ACHN (cell line): ENCODE measurements at regions of chr2 and their contacts with region 1.

Region 1: DNA sequence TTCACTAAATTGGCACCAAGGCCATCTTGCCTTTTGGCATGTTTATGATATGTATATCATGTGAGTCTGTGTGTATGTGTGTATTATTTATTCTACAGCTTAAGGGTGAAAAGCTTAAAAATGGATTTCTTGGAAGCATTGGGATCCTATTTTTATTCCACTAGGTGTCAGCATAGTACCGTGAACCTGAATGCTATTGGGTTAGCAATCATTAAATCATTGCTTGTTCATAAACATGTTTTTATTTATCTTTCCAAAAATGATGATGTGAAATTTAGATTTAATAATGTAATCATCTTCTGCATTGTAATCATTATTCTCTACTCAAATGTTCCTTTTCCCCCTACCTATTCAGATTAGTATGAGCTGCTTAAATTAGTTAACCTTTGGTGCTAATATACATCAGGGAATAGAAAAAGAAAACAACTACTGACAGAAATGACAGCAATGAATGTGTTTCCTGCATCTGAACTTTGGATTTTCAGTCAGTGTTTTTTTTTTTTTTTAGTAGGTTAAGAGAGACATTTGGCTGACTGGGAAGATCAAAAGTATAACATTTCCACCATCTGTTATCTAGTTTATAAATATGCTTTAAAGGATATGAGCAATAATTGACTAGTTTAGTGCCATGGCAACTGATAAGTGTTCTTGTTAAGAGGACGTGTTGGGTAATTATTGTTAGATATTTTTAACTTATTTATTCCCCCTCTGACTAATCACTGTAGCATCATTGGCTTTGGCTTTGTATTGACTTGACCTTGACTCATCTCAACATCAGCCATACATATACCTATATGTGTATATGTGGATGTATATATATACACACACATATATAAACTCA is 14.1 kb upstream of the ZSWIM2 start:
- DNase-seq: peak; percentile 49

Region 2: GRCh38 chr2:186612555-186613440 is 250.3 kb before region 1 on chr2:
- in situ Hi-C with region 1: no loop called
- DNase-seq: no peak

Region 3: DNA sequence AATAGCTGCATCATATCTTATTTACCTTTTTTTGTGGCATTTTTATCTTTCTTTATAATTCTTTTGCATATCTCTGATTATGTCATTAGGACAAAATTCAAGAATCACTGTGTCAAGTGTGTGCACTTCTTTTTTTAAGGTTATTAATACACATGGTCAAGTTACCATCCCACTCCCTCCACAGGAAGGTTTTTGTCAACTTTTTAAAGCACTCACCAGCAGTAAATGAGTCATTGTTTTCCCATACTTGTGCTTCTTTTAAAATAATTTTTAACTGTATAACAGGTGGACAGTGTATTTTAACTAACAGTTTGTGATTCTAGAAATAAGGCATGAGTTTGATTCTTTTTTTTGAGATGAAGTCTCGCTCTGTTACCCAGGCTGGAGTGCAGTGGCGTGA is 215.0 kb before region 1 on chr2:
- in situ Hi-C with region 1: no loop called
- DNase-seq: no peak

Region 4: DNA sequence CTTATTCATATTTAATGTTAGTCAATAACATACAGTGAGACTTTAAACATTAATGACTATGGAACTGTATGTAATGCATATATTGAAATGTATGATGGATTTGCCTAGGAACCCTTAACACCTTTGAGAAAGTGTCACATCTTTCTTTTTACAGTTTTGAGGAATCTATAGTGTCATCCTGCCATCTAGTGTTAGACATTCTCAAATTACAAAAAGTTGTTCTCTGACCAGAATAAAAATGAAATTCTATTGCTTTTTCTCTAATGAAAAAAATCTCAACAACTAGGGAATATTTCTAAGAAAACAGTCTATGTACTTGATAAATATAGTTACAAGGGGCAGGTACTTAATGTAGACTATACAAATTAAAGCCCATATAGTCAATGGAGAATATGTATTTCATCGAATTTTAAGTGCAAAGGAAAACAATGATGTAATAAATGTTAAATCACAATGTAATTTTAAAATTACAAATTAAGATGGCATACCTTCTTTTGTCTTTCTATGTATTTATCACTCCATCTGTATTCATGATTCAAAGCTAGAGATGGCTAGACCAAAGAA is 590.1 kb after region 1 on chr2:
- in situ Hi-C with region 1: loop called (anchors 25 kb)
- DNase-seq: peak; percentile 58